ENCODE measurements at regions of chr3 and their contacts with region 1.

Region 1: GRCh38 chr3:14915636-14916222 is 31.7 kb upstream of the NR2C2 start:
- DNase-seq: no peak
- H3K4me3 ChIP-seq: no peak overlapping the region
- H3K27ac ChIP-seq: no peak overlapping the region
- H3K4me1 ChIP-seq: no peaks in the 10 kb centered on the region; a peak in 2 of 7 replicates
- H3K27me3 ChIP-seq: no peaks in the 10 kb centered on the region
- CTCF ChIP-seq: peak in 2 of 3 experiments; percentile 46 to 52; a peak in 3 of 4 replicates
- EP300 ChIP-seq: no peak
- POLR2A ChIP-seq: no peak
- RAD21 ChIP-seq: peak; percentile 65 to 74

Region 2: GRCh38 chr3:14857506-14857905 is 58.2 kb before region 1 on chr3:
- CTCF ChIA-PET with region 1: interaction called, 54 read pairs
- POLR2A ChIA-PET with region 1: interaction called, 3 read pairs
- DNase-seq: no peak
- H3K4me3 ChIP-seq: no peak overlapping the region
- H3K27ac ChIP-seq: no peak overlapping the region
- H3K4me1 ChIP-seq: peaks cover 3 to 8% (median 5%) of the 10 kb centered on the region in 4 experiments
- H3K27me3 ChIP-seq: no peaks in the 10 kb centered on the region; a peak in 1 of 7 replicates
- CTCF ChIP-seq: peak in 2 of 3 experiments; percentile 55 to 59; a peak in 3 of 4 replicates
- EP300 ChIP-seq: no peak
- POLR2A ChIP-seq: no peak
- RAD21 ChIP-seq: peak; percentile 78 to 82

Region 3: GRCh38 chr3:15086263-15086662 is 170.5 kb after region 1 on chr3:
- CTCF ChIA-PET with region 1: no interaction called
- POLR2A ChIA-PET with region 1: no interaction called
- DNase-seq: no peak
- H3K4me3 ChIP-seq: no peak overlapping the region
- H3K27ac ChIP-seq: no peak overlapping the region
- H3K4me1 ChIP-seq: no peaks in the 10 kb centered on the region
- H3K27me3 ChIP-seq: no peaks in the 10 kb centered on the region
- CTCF ChIP-seq: no peak
- EP300 ChIP-seq: no peak
- POLR2A ChIP-seq: no peak
- RAD21 ChIP-seq: no peak

Measured in H1 (cell line).